Activated naive CD4-positive, alpha-beta T cell treated with anti-CD3 and anti-CD28 coated beads, Interleukin-2, amount 10 ng/mL, durations not matched to agents 7 days and 5 days (primary cell): ENCODE measurements at regions of chr16 and their contacts with region 1.

Region 1: DNA sequence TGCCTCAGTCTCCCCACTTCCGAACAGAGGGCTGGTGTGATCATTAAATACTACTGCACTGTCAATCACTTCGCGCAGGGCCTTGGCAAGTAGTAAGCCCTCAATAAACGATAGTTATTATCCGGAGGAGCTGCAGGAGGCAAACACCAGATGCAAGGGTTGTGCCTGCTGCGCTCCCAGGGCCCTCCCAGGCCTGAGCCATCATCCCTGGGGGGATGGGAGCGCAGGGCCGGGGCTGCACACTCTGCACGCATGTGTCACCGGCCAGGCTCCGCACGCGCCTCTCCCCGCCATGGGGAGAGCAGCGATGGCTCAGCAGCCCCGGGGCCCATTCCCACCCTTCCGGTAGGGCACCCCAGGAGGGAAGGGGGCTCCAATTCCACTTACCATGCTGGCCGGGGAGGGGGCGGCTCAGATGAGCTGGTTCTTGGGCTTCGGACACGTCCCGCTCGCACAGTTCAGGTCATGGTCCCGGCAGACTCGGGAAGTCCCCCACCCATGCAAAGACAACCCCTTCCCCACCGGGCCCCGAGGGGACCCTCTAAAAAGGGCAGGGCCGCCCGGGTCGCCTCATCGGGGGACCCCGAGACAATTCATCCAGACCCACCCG is 681 bp downstream of the XPO6 start:
- DNase-seq: peak; percentile 74
- H3K4me3 Mint-ChIP-seq: peak overlapping the region; percentile 73
- H3K27ac Mint-ChIP-seq: peak overlapping the region; percentile 60
- H3K4me1 Mint-ChIP-seq: peaks cover 52% of the 10 kb centered on the region
- H3K27me3 Mint-ChIP-seq: no peaks in the 10 kb centered on the region

Region 2: GRCh38 chr16:28140788-28141618 is 70.1 kb before region 1 on chr16:
- CTCF ChIA-PET with region 1: interaction called, 100 read pairs
- DNase-seq: peak; percentile 81
- H3K4me3 Mint-ChIP-seq: peak overlapping the region; percentile 71
- H3K27ac Mint-ChIP-seq: peak overlapping the region; percentile 100
- H3K4me1 Mint-ChIP-seq: peaks cover 97% of the 10 kb centered on the region
- H3K27me3 Mint-ChIP-seq: no peaks in the 10 kb centered on the region

Region 3: GRCh38 chr16:28149011-28149888 is 61.8 kb before region 1 on chr16:
- CTCF ChIA-PET with region 1: interaction called, 16 read pairs
- DNase-seq: peak; percentile 62
- H3K4me3 Mint-ChIP-seq: peak overlapping the region; percentile 22
- H3K27ac Mint-ChIP-seq: peak overlapping the region; percentile 88
- H3K4me1 Mint-ChIP-seq: peaks cover 72% of the 10 kb centered on the region
- H3K27me3 Mint-ChIP-seq: no peaks in the 10 kb centered on the region

Region 4: DNA sequence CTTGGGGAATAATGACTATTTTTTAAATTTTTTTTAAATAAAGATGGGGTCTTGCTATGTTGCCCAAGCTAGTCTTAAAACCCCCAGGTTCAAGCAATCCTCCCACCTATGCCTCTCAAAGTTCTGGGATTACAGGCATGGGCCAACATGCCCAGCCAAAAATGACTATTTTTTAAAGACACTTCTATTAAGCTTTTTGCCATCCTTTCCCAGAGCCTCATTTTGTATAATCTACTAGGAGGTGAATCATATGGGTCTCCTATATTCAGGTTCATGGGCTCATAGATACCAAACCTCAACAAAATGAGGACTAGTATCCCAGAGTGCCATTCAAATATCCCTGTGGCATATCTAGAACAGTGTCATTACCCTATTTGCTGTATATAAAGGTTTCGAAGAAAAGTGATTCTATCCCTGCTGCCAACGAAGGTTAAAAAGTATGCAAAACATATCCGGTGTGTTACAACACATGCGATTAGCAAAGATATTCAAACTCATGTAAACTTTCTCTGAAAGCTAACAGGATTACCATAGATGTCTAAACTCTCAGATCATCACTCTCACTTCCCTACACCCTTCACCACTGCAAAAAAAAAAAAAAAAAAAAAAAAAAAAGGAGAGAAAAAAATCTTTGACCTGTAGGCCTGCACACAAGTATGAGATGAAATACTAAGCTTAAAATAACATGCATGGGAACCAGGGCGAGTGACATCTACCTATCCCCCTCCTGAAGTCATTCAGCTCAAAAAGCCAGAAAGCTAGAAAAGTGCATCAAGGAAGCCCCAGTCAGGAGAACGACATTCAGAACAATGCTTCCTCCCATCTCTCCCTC is 22.8 kb before region 1 on chr16:
- CTCF ChIA-PET with region 1: interaction called, 50 read pairs
- DNase-seq: no peak
- H3K4me3 Mint-ChIP-seq: peak overlapping the region; percentile 46
- H3K27ac Mint-ChIP-seq: peak overlapping the region; percentile 94
- H3K4me1 Mint-ChIP-seq: peaks cover 91% of the 10 kb centered on the region
- H3K27me3 Mint-ChIP-seq: no peaks in the 10 kb centered on the region

Region 5: DNA sequence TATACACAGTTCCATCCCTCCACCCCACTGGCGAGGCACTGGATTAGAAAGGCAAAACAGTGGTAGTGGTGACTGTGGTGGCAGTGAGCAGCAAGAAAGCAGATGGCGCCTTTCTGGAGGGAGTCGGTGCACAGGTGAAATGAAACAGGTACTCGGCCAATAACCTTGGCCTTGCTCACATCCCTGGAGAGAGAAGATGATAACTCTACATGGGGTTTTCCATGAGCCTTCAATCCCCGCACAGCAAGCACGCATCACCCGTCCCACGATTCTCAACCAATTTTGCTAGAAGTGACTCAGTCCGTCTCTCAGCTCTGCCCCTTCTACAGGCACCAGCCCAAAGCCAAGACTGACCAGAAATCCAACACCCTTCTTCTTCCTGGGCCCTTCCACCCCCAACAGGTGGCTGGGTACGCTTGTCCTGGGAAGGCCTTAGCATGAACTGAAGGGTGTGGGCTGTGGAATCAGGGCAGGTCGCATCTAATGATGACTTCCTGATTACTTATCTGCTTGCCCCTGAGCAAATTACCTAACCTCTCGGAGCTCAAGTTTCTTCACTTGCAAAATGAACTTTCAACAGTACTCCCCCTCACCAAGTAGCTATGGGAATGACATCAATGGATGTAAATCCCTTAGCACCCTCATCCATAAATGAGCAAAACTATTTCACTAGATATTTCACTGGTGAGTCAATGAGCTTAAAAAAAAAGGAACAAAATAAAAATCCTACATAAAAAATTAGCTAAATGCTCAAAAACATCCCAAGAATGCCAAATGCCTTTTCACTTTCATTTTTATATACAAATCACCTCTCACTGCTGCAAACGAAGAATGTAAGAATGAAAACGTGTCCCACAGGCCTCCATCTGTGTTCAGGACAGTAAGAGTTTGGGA is 17.3 kb before region 1 on chr16:
- CTCF ChIA-PET with region 1: interaction called, 50 read pairs
- DNase-seq: peak; percentile 39
- H3K4me3 Mint-ChIP-seq: peak overlapping the region; percentile 65
- H3K27ac Mint-ChIP-seq: peak overlapping the region; percentile 93
- H3K4me1 Mint-ChIP-seq: peaks cover 84% of the 10 kb centered on the region
- H3K27me3 Mint-ChIP-seq: no peaks in the 10 kb centered on the region

Region 6: GRCh38 chr16:28250999-28251398 is 39.9 kb after region 1 on chr16:
- CTCF ChIA-PET with region 1: no interaction called
- DNase-seq: no peak
- H3K4me3 Mint-ChIP-seq: no peak overlapping the region
- H3K27ac Mint-ChIP-seq: no peak overlapping the region
- H3K4me1 Mint-ChIP-seq: no peaks in the 10 kb centered on the region
- H3K27me3 Mint-ChIP-seq: peaks cover 23% of the 10 kb centered on the region